Caco-2 (cell line): ENCODE measurements at regions of chr17 and their contacts with region 1.

Region 1: DNA sequence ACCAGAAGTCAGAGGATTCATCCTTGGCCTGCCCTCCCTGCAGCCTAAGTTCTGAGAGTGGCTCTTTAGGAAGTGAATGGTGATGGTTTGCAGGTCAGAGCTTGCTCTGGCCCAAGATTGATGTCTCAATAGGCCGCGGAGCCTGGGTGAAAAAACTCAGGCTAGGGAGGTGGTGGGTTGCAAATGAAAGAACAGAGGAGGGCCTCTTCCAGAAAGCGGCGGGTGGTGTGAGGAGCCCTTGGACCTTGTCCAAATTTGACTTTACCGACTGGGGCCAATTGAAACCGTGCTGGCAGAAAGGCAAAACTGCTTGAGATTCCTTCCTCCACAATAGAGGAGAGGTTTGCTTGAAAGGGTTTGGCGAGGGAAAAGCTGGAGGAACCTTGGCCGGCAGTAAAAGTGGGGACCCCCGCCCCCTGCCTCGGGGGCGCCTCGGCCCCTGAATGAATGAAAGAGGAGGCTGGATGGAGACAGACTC is 331.3 kb downstream of the SEC14L1 start:
- DNase-seq: no peak
- H3K4me3 ChIP-seq: no peak overlapping the region
- H3K4me3 Mint-ChIP-seq: peak overlapping the region; percentile 42
- H3K27ac Mint-ChIP-seq: peak overlapping the region; percentile 96
- H3K4me1 ChIP-seq: peaks cover 49% of the 10 kb centered on the region
- H3K4me1 Mint-ChIP-seq: peaks cover 64% of the 10 kb centered on the region
- H3K27me3 ChIP-seq: no peaks in the 10 kb centered on the region
- H3K27me3 Mint-ChIP-seq: no peaks in the 10 kb centered on the region
- CTCF ChIP-seq: no peak

Region 2: GRCh38 chr17:77400445-77400870 is 71.6 kb before region 1 on chr17:
- CTCF ChIA-PET with region 1: no interaction called
- POLR2A ChIA-PET with region 1: no interaction called
- intact Hi-C with region 1: no loop called
- DNase-seq: peak in 1 of 2 experiments; percentile 43
- H3K4me3 ChIP-seq: no peak overlapping the region
- H3K4me3 Mint-ChIP-seq: no peak overlapping the region
- H3K27ac Mint-ChIP-seq: peak overlapping the region; percentile 27
- H3K4me1 ChIP-seq: no peaks in the 10 kb centered on the region
- H3K4me1 Mint-ChIP-seq: no peaks in the 10 kb centered on the region
- H3K27me3 ChIP-seq: no peaks in the 10 kb centered on the region
- H3K27me3 Mint-ChIP-seq: no peaks in the 10 kb centered on the region
- CTCF ChIP-seq: peak; percentile 16 to 25

Region 3: DNA sequence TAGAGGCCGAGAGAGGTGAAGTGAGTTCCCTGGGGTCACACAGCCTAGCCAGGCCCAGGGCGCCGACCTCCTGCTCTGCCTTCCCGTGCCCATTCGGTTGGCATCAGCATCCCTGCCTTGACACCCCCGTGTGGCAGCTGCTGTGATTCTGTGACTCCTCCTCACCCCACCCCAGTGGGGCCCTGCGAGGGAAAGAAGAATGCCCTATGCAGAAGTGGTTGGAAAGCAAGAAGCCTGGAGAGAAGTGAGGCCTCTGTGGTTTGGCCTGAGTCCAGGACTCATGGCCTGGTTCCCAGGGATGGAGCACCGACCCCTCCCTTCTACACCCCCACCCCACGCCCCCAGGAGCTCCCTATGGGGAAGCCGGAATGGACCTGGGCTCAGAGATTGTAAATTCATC is 35.0 kb before region 1 on chr17:
- CTCF ChIA-PET with region 1: no interaction called
- POLR2A ChIA-PET with region 1: no interaction called
- intact Hi-C with region 1: loop called (anchors 5 kb)
- DNase-seq: no peak
- H3K4me3 ChIP-seq: no peak overlapping the region
- H3K4me3 Mint-ChIP-seq: no peak overlapping the region
- H3K27ac Mint-ChIP-seq: no peak overlapping the region
- H3K4me1 ChIP-seq: 0 out of 2 replicates have a peak, but pooled peaks cover 5% of the 10 kb centered on the region
- H3K4me1 Mint-ChIP-seq: no peaks in the 10 kb centered on the region
- H3K27me3 ChIP-seq: no peaks in the 10 kb centered on the region
- H3K27me3 Mint-ChIP-seq: no peaks in the 10 kb centered on the region
- CTCF ChIP-seq: no peak

Region 4: GRCh38 chr17:77451245-77451893 is 20.7 kb before region 1 on chr17:
- CTCF ChIA-PET with region 1: interaction called, 4 read pairs
- POLR2A ChIA-PET with region 1: interaction called, 18 read pairs
- intact Hi-C with region 1: no loop called
- DNase-seq: peak; percentile 91
- H3K4me3 ChIP-seq: peak overlapping the region; percentile 77
- H3K4me3 Mint-ChIP-seq: peak overlapping the region; percentile 88
- H3K27ac Mint-ChIP-seq: peak overlapping the region; percentile 95
- H3K4me1 ChIP-seq: peaks cover 39% of the 10 kb centered on the region
- H3K4me1 Mint-ChIP-seq: peaks cover 43% of the 10 kb centered on the region
- H3K27me3 ChIP-seq: no peaks in the 10 kb centered on the region
- H3K27me3 Mint-ChIP-seq: no peaks in the 10 kb centered on the region
- CTCF ChIP-seq: no peak